ENCODE measurements at regions of chr14 and their contacts with region 1.

Region 1: DNA sequence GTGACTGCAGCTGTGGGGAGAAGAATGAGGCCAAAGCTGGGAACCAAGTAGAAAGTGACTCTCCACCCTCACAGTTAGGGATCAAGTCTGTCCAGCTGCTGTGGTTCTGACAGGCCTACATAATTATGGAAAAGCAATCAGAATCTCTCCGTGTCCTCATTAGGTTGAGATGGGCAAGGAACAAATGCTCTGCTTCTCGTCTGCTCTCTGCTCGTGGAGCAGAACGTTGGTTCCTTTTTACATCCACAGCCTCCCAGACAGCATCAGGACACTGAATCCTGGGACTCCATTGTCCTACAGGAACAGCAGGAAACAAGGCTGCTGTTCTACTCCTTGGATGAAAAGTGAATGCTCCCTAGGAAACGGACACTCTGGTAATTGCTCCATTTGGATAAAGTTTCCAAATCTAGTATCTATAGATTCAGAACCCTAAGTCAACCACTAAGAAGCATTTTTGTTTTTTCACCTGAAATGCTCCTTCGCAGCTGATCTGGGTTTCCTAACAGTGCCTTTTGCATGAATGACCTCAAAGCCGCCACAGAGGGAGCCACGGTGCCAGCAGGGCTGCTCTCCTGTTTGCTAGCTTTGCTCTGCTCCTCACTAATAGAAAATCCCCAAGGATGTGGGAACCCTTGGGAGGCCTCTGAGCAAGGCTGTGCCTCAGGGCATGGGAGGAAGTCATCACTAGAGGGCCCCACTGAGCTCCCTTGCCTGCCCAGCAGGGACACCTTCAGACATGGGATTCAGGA is 102.0 kb downstream of the EGLN3 start:
- DNase-seq: peak; percentile 30 to 71 (median 46)
- ATAC-seq: peak; percentile 96
- H3K4me3 ChIP-seq: no peak overlapping the region
- H3K27ac ChIP-seq: no peak overlapping the region
- H3K4me1 ChIP-seq: peaks cover 0 to 11% of the 10 kb centered on the region in 2 experiments; a peak in 2 of 5 replicates
- H3K27me3 ChIP-seq: no peaks in the 10 kb centered on the region
- CTCF ChIP-seq: peak; percentile 64 to 75 (median 68)
- EP300 ChIP-seq: no peak
- POLR2A ChIP-seq: no peak
- RAD21 ChIP-seq: peak; percentile 46 to 73; a peak in 3 of 4 replicates

Region 2: GRCh38 chr14:33914676-33915516 is 66.0 kb after region 1 on chr14:
- CTCF ChIA-PET with region 1: no interaction called
- POLR2A ChIA-PET with region 1: no interaction called
- in situ Hi-C with region 1: no loop called
- intact Hi-C with region 1: loop called (anchors 5 kb)
- DNase-seq: peak; percentile 24 to 64 (median 26)
- ATAC-seq: peak; percentile 33
- H3K4me3 ChIP-seq: no peak overlapping the region
- H3K27ac ChIP-seq: peak overlapping the region; percentile 43; the same call in 1 of the 3 replicates
- H3K4me1 ChIP-seq: peaks cover 14 to 49% of the 10 kb centered on the region in 2 experiments; a peak in 4 of 5 replicates
- H3K27me3 ChIP-seq: no peaks in the 10 kb centered on the region
- CTCF ChIP-seq: no peak
- EP300 ChIP-seq: no peak
- POLR2A ChIP-seq: no peak
- RAD21 ChIP-seq: no peak

Region 3: GRCh38 chr14:33950320-33951182 is 101.7 kb after region 1 on chr14 and contains the start of gene EGLN3:
- CTCF ChIA-PET with region 1: no interaction called
- POLR2A ChIA-PET with region 1: interaction called, 8 read pairs
- in situ Hi-C with region 1: no loop called
- intact Hi-C with region 1: loop called (anchors 5 kb)
- DNase-seq: peak; percentile 85 to 90 (median 88)
- ATAC-seq: peak; percentile 95
- H3K4me3 ChIP-seq: peak within 1 kb of the TSS; percentile 60
- H3K27ac ChIP-seq: peak within 1 kb of the TSS; percentile 68
- H3K4me1 ChIP-seq: peaks cover 9 to 13% of the 10 kb centered on the region in 2 experiments; a peak in 4 of 5 replicates
- H3K27me3 ChIP-seq: no peaks in the 10 kb centered on the region
- CTCF ChIP-seq: no peak
- EP300 ChIP-seq: no peak
- POLR2A ChIP-seq: peak; percentile 97
- RAD21 ChIP-seq: 0 out of 4 replicates have a peak, but pooled peaks of 1 of the 2 experiments have one; percentile 8
- polyA plus RNA-seq, gene EGLN3: 2.5 to 3.0 TPM

Region 4: DNA sequence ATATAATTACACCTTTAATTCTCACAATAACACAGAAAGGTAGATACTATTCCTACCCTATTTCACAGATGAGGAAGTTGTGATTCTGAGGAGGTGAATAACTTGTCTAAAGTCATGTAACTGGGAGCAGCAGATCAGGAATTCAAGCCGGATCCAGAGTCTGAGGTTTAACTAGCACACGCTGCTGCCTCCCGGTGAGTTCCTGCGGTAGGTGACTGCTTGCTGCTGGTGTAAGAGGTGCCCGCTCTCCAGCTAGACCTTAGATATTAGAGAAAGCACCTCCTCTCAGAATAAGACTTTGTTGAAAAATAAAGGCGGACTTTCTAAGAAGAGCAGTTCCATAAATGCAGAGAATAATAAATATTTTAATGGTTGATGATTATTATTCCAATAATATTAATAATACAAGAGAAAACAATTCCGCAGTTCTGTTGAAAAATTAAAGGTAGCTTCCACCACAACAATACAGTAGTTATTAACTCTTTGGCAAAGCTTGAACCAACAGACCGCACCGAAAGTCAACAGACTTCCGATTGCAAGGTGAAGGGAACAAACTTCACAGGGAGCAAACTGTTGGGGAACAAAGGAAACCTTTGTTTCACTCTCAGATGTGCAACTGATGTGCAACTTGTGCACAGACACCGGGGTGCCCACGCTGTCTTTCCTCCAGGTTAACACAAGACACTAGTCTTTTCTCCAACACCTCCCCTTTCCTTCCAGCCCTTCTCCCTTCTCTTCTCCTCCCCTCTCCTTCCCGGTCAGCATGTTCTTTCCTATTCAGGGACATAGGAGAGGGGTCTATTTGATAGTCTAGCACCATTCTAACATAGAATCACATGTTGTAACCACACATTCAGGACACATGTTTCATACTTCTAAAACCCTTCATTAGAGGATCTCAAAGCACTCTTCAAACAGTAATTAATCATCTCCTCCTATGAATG is 175.2 kb after region 1 on chr14:
- CTCF ChIA-PET with region 1: no interaction called
- POLR2A ChIA-PET with region 1: no interaction called
- in situ Hi-C with region 1: no loop called
- intact Hi-C with region 1: loop called (anchors 5 kb)
- DNase-seq: no peak
- ATAC-seq: peak; percentile 57; the same call in 2 of the 3 replicates
- H3K4me3 ChIP-seq: no peak overlapping the region
- H3K27ac ChIP-seq: no peak overlapping the region
- H3K4me1 ChIP-seq: peaks cover 0 to under 1% of the 10 kb centered on the region in 2 experiments; a peak in 1 of 5 replicates
- H3K27me3 ChIP-seq: no peaks in the 10 kb centered on the region
- CTCF ChIP-seq: peak in 2 of 3 experiments; percentile 4 to 6; a peak in 1 of 6 replicates
- EP300 ChIP-seq: no peak
- POLR2A ChIP-seq: no peak
- RAD21 ChIP-seq: peak in 1 of 2 experiments; percentile 38; a peak in 2 of 4 replicates

Region 5: GRCh38 chr14:35458442-35458841 is 1609.6 kb after region 1 on chr14:
- CTCF ChIA-PET with region 1: no interaction called
- POLR2A ChIA-PET with region 1: no interaction called
- in situ Hi-C with region 1: no loop called
- intact Hi-C with region 1: no loop called
- DNase-seq: no peak
- ATAC-seq: no peak
- H3K4me3 ChIP-seq: no peak overlapping the region
- H3K27ac ChIP-seq: no peak overlapping the region
- H3K4me1 ChIP-seq: no peaks in the 10 kb centered on the region
- H3K27me3 ChIP-seq: no peaks in the 10 kb centered on the region
- CTCF ChIP-seq: no peak
- EP300 ChIP-seq: no peak
- POLR2A ChIP-seq: no peak
- RAD21 ChIP-seq: no peak

Measured in K562 (cell line).